HEK293T (cell line): ENCODE measurements at regions of chr6 and their contacts with region 1.

Region 1: DNA sequence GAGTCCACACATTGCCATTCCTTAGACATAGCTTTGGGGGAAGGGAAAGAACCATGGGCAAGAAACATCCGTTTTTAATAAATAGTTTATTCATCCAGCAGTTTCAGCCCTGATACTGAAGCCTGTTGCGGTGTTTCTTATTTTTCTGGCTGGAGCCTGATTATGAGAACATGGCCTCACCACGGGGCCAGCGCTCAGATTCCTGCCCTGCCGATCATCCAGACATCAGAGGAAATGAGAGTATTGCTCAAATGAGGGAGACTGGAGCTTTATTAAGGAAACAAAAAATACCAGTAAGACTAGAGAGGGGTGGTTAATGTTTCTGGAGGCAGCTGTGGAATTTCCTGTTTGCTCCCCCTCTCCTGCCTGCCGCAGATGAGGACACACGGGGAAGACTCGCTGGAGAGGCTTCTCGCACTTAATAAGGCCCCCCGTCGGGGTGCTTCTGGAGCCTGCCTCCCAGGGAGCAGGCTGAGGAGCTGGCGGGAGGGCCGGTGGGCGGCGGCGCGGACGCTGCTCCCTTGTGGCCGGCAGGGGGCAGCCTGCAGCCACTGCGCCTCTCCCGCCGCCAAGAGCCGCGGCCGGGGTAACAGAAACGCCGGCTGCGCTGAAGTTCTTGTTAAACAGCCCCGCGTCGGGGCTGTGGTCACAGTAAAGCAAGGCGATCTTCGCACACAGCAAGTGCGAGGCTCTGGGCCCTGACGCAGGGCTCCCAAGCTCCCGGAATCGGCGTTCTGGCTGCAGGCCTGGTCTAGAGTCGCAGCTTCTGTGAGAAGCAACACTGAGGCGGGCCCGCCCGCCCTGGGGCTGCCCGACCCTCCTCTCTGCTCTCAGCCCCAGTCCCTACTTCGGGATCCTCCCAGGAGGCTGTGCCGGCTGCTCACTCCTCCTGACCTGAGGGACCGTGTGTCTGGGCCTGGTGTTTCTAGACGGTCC is 17.5 kb downstream of the LEMD2 start:
- DNase-seq: peak; percentile 85

Region 2: GRCh38 chr6:33788694-33789549 is 17.5 kb after region 1 on chr6 and contains the start of gene LEMD2:
- CTCF ChIA-PET with region 1: interaction called, 3 read pairs
- POLR2A ChIA-PET with region 1: interaction called, 13 read pairs
- DNase-seq: peak; percentile 95

Region 3: GRCh38 chr6:33914645-33915044 is 143.2 kb after region 1 on chr6:
- CTCF ChIA-PET with region 1: no interaction called
- POLR2A ChIA-PET with region 1: no interaction called
- DNase-seq: no peak

Region 4: GRCh38 chr6:34027445-34027936 is 256.1 kb after region 1 on chr6:
- CTCF ChIA-PET with region 1: interaction called, 26 read pairs
- POLR2A ChIA-PET with region 1: interaction called, 3 read pairs
- DNase-seq: peak; percentile 74